PC-9 (cell line): ENCODE measurements at regions of chr5 and their contacts with region 1.

Region 1: GRCh38 chr5:52989781-52990527 is 802 bp downstream of the ITGA2 start:
- DNase-seq: peak in 1 of 2 experiments; percentile 25
- H3K4me3 ChIP-seq: peak overlapping the region; percentile 91
- H3K27ac ChIP-seq: peak overlapping the region; percentile 95
- H3K4me1 ChIP-seq: peaks cover 75% of the 10 kb centered on the region
- H3K27me3 ChIP-seq: no peaks in the 10 kb centered on the region
- CTCF ChIP-seq: peak; percentile 40

Region 2: DNA sequence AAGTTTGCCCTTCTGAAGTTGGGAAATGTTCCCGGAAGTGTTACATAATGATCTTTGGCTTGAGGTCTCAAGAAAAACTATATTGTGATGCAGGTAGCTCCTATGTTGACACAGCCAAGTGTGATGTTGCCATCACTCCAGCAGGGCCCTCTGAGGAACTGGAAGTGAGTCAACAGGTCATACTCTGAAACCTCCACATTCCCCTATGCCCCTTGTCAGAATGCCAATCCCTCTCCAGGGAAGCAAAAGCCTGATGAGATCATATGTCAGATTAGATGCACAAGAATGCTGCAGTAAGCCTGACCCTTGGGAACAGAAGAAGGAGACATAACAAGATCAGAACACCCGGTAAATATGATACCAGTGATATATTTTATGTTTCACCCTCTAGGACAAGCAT is 67.6 kb before region 1 on chr5:
- CTCF ChIA-PET with region 1: no interaction called
- POLR2A ChIA-PET with region 1: no interaction called
- intact Hi-C with region 1: loop called (anchors 1 kb)
- DNase-seq: peak; percentile 83 to 98
- H3K4me3 ChIP-seq: no peak overlapping the region
- H3K27ac ChIP-seq: peak overlapping the region; percentile 78
- H3K4me1 ChIP-seq: peaks cover 20% of the 10 kb centered on the region
- H3K27me3 ChIP-seq: no peaks in the 10 kb centered on the region
- CTCF ChIP-seq: no peak

Region 3: GRCh38 chr5:53035868-53036381 is 46.0 kb after region 1 on chr5:
- CTCF ChIA-PET with region 1: interaction called, 4 read pairs
- POLR2A ChIA-PET with region 1: interaction called, 5 read pairs
- intact Hi-C with region 1: loop called (anchors 1 kb)
- DNase-seq: no peak
- H3K4me3 ChIP-seq: no peak overlapping the region
- H3K27ac ChIP-seq: peak overlapping the region; percentile 94
- H3K4me1 ChIP-seq: peaks cover 80% of the 10 kb centered on the region
- H3K27me3 ChIP-seq: no peaks in the 10 kb centered on the region
- CTCF ChIP-seq: peak; percentile 38; the same call in 1 of the 2 replicates

Region 4: DNA sequence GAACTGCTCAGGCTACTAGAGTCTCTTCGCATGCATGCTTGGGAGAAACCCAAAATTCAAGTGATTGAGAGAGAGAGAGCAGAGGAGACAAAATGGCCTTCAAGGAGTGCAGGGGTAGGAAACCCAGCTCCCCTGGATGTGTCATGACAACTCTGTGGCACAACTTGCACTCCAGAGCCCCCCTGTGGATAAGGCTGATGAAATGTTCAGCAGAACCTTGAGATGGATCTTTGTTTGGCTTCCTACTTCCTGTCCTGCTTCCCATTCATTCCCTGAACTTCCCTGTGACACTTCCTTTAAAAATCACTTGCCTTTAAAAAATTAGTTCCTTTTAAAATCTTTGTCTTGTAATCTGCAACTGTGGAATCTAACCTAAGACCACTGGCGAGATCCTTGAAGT is 361.4 kb after region 1 on chr5:
- CTCF ChIA-PET with region 1: no interaction called
- POLR2A ChIA-PET with region 1: no interaction called
- intact Hi-C with region 1: no loop called
- DNase-seq: no peak
- H3K4me3 ChIP-seq: no peak overlapping the region
- H3K27ac ChIP-seq: no peak overlapping the region
- H3K4me1 ChIP-seq: peaks cover 13% of the 10 kb centered on the region
- H3K27me3 ChIP-seq: no peaks in the 10 kb centered on the region
- CTCF ChIP-seq: no peak

Region 5: GRCh38 chr5:53362521-53362941 is 372.6 kb after region 1 on chr5:
- CTCF ChIA-PET with region 1: no interaction called
- POLR2A ChIA-PET with region 1: no interaction called
- intact Hi-C with region 1: loop called (anchors 5 kb)
- DNase-seq: peak; percentile 45 to 95
- H3K4me3 ChIP-seq: no peak overlapping the region
- H3K27ac ChIP-seq: peak overlapping the region; percentile 97
- H3K4me1 ChIP-seq: peaks cover 38% of the 10 kb centered on the region
- H3K27me3 ChIP-seq: no peaks in the 10 kb centered on the region
- CTCF ChIP-seq: no peak